ENCODE measurements at regions of chr15 and their contacts with region 1.

Region 1: DNA sequence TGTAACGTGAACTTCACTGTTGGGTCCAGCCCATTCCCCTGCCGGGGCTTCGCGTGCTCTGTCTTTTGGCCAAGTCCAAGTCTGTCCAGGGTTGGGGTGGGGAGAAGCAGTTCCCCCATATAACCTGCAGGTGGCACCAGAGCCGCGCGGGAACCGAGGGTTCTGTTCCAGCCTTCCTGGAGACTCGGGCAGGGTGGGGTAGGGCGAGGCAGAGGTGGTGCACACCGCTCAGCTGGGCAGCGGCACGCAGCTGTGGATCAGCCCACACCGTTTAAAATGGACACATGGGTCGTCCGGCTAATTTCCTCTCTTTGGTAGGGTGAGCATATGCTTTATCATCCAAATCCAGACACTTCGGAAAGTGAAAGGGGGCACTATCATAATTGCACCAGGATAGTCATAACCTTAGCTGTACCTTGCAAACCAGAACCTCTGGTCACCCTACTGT is 118.1 kb downstream of the TBC1D2B start:
- DNase-seq: peak; percentile 21 to 87
- H3K4me3 ChIP-seq: peak overlapping the region in 1 of 2 donors; percentile 41
- H3K27ac ChIP-seq: no peak overlapping the region
- H3K4me1 ChIP-seq: no peaks in the 10 kb centered on the region
- H3K27me3 ChIP-seq: no peaks in the 10 kb centered on the region
- CTCF ChIP-seq: peak; percentile 93 to 99 (median 94)

Region 2: GRCh38 chr15:78195735-78196201 is 236.3 kb after region 1 on chr15:
- intact Hi-C with region 1: loop called (anchors 1 kb)
- DNase-seq: peak in 1 of 2 donors; percentile 63
- H3K4me3 ChIP-seq: no peak overlapping the region
- H3K27ac ChIP-seq: no peak overlapping the region
- H3K4me1 ChIP-seq: no peaks in the 10 kb centered on the region
- H3K27me3 ChIP-seq: no peaks in the 10 kb centered on the region
- CTCF ChIP-seq: peak; percentile 60 to 69 (median 63)

Region 3: GRCh38 chr15:78241007-78241406 is 281.6 kb after region 1 on chr15:
- intact Hi-C with region 1: loop called (anchors 1 kb)
- DNase-seq: peak in 1 of 2 donors; percentile 86
- H3K4me3 ChIP-seq: no peak overlapping the region
- H3K27ac ChIP-seq: no peak overlapping the region
- H3K4me1 ChIP-seq: no peaks in the 10 kb centered on the region
- H3K27me3 ChIP-seq: no peaks in the 10 kb centered on the region
- CTCF ChIP-seq: peak; percentile 72 to 87 (median 84)

Region 4: GRCh38 chr15:78596514-78596913 is 637.1 kb after region 1 on chr15:
- intact Hi-C with region 1: no loop called
- DNase-seq: no peak
- H3K4me3 ChIP-seq: no peak overlapping the region
- H3K27ac ChIP-seq: no peak overlapping the region
- H3K4me1 ChIP-seq: no peaks in the 10 kb centered on the region
- H3K27me3 ChIP-seq: no peaks in the 10 kb centered on the region
- CTCF ChIP-seq: no peak

Measured in ascending aorta (tissue), 2 donors.